Naive thymus-derived CD4-positive, alpha-beta T cell (primary cell): ENCODE measurements at regions of chr14 and their contacts with region 1.

Region 1: DNA sequence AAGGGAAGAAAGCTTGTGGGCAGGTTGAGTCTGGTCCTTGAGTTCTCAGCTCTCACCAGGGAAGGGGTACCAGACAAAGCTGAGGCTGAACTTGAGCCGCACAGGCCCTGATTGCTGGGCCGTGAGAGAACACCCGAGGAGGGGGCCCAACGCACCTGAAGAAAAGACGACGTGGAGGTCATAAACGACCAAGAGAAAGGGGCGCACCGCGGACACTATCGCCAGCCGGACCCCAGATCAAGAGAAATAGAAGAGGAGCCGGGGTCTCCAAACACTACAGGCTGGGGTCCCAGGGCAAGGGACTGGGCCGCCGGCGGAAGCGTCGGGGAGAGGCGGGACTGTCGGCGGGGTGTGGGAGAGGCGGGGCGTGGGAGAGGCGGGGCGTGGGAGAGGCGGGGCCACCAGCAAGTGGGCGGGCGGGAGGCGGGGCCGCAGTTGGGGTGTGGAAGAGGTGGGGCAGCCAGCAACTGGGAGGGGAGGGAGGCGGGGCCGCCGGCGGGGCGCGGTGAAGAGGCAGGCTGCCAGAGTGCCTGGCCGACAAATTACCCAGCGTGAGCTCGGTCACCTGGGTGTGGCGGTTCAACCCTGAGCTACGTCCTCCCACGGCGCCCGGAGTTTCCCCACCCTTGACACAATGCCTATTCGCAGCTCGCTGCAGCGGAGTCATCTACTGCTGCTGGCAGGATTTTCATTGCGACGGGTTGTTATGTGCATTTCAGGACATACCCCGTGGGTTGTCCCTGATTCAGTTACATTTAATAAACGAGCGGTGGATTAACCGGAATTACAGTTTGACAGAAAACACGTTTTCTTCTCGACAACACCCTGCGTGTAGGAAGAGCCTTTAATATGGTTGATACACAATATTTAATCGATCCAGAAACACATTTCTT is 15.5 kb upstream of the NEMF start:
- DNase-seq: peak; percentile 87 to 97 (median 93)
- ATAC-seq: peak; percentile 96
- H3K4me3 ChIP-seq: peak overlapping the region; percentile 75
- H3K4me3 Mint-ChIP-seq: peak overlapping the region; percentile 79 to 95 (median 90)
- H3K27ac ChIP-seq: peak overlapping the region; percentile 91
- H3K27ac Mint-ChIP-seq: peak overlapping the region; percentile 93 to 99 (median 97)
- H3K4me1 ChIP-seq: peaks cover 31 to 35% of the 10 kb centered on the region in 2 donors
- H3K4me1 Mint-ChIP-seq: peaks cover 9 to 31% (median 17%) of the 10 kb centered on the region in 7 donors
- H3K27me3 ChIP-seq: no peaks in the 10 kb centered on the region
- H3K27me3 Mint-ChIP-seq: no peaks in the 10 kb centered on the region

Region 2: DNA sequence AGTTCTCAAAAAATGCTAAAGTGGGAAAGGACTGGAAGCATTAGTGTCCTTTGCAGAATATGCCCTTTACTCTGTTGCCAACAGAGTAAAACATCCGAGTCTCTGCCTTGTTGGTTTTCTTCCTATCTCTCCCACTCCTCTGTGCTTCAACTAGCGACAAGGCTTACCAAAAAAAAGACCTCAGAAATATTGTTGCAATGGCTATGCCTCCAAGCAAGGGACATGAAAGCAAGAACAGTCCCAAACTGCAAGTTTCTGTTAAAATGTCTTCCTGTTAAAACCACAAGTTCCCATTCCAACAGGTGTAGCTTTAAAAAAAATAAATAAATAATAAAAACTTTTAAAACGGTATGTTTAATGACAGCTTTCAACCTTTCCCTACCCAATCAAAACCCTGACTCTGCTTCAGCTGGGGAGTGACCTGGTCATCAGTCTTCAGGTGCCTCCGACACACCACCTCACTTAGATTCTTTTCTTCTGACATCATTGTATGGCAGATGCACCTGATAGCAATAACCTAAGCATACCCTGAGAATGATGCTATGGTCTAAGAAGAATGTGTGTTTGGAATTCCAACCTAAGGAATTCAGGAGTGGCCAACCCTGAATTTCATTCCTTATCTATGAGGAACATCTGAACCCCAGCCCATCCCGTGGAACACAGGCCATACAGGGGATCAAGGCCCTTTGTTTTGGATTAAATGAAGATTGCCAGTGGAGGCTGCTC is 362.9 kb before region 1 on chr14:
- CTCF ChIA-PET with region 1: no interaction called
- POLR2A ChIA-PET with region 1: no interaction called
- intact Hi-C with region 1: no loop called
- DNase-seq: no peak
- ATAC-seq: no peak
- H3K4me3 ChIP-seq: no peak overlapping the region
- H3K4me3 Mint-ChIP-seq: no peak overlapping the region
- H3K27ac ChIP-seq: no peak overlapping the region
- H3K27ac Mint-ChIP-seq: no peak overlapping the region
- H3K4me1 ChIP-seq: no peaks in the 10 kb centered on the region
- H3K4me1 Mint-ChIP-seq: peaks cover 0 to 2% (median 0%) of the 10 kb centered on the region in 7 donors
- H3K27me3 ChIP-seq: no peaks in the 10 kb centered on the region
- H3K27me3 Mint-ChIP-seq: peaks cover 10 to 25% (median 15%) of the 10 kb centered on the region in 5 donors

Region 3: DNA sequence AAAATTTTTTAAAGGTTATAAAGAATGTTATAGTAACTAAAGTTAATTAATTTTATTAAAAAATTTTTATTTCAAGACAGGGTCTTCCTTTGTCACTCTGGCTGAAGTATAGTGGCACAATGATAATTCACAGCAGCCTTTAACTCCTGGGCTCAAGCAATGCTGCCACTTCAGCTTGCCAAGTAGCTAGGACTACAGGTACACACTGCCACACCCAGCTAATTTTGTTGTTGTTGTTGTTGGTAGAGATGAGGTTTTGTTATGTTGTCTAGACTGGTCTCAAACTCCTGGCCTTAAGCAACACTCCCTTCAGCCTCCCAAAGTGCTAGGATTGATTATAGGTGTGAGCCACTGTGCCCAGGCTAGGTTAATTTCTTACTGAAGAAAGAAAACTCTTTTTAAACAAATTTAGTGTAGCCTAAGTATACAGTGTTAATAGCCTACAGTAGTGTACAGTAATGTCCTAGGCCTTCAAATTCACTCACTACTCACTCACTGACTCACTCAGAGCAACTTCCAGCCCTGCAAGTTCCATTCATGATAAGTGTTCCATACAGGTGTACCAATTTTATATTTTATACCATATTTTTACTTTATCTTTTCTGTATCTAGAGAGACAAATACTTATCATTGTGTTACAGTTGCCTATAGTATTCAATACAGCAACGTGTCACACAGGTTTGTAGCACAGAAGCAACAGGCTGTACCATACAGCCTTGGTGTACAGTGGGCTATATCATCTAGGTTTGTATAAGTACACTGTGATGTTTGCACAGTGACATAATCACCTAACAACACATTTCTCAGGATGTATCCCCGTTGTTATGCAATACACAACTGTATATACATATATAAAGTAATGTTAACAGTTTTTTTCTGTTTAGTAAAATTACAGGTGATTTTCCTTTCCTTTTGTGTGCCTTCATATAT is 208.3 kb before region 1 on chr14:
- CTCF ChIA-PET with region 1: no interaction called
- POLR2A ChIA-PET with region 1: no interaction called
- intact Hi-C with region 1: no loop called
- DNase-seq: no peak
- ATAC-seq: no peak
- H3K4me3 ChIP-seq: no peak overlapping the region
- H3K4me3 Mint-ChIP-seq: no peak overlapping the region
- H3K27ac ChIP-seq: no peak overlapping the region
- H3K27ac Mint-ChIP-seq: no peak overlapping the region
- H3K4me1 ChIP-seq: no peaks in the 10 kb centered on the region
- H3K4me1 Mint-ChIP-seq: no peaks in the 10 kb centered on the region
- H3K27me3 ChIP-seq: no peaks in the 10 kb centered on the region
- H3K27me3 Mint-ChIP-seq: no peaks in the 10 kb centered on the region

Region 4: DNA sequence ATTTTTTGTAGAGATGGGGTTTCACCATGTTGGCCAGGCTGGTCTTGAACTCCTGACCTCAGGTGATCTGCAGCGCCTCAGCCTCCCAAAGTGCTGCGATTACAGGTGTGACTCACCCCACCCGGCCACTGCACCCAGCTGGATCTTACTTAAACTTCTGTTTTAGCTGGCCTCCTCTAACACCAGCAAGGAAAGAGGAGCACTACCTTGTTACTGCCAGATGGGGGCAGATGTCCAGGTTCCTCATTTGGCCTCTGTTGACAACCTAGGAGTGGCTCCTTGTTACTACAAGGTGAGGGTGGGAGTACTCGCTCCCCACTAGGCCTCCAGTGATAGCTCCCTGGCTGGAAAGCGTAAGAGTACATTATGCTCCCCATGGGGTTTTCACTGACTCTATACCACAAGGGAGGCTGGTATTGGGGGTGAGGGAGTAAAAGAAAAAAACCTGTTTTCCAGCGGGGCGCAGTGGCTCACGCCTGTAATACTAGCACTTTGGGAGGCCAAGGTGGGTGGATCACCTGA is 11.7 kb after region 1 on chr14:
- CTCF ChIA-PET with region 1: interaction called, 11 read pairs
- POLR2A ChIA-PET with region 1: interaction called, 15 read pairs
- intact Hi-C with region 1: loop called in 1 of 2 experiments (anchors 1 kb)
- DNase-seq: peak in 8 of 9 donors; percentile 32 to 64 (median 48)
- ATAC-seq: peak; percentile 92
- H3K4me3 ChIP-seq: no peak overlapping the region
- H3K4me3 Mint-ChIP-seq: no peak overlapping the region
- H3K27ac ChIP-seq: no peak overlapping the region
- H3K27ac Mint-ChIP-seq: peak overlapping the region in 6 of 9 donors; percentile 17 to 74 (median 44)
- H3K4me1 ChIP-seq: peaks cover 0 to 6% of the 10 kb centered on the region in 2 donors
- H3K4me1 Mint-ChIP-seq: peaks cover 10 to 30% (median 12%) of the 10 kb centered on the region in 7 donors
- H3K27me3 ChIP-seq: no peaks in the 10 kb centered on the region
- H3K27me3 Mint-ChIP-seq: peaks cover 0 to 3% (median 0%) of the 10 kb centered on the region in 5 donors

Region 5: GRCh38 chr14:49946320-49947141 is 78.5 kb after region 1 on chr14:
- CTCF ChIA-PET with region 1: interaction called, 7 read pairs
- POLR2A ChIA-PET with region 1: interaction called, 35 read pairs
- intact Hi-C with region 1: no loop called
- DNase-seq: peak in 7 of 9 donors; percentile 30 to 55 (median 43)
- ATAC-seq: peak; percentile 71
- H3K4me3 ChIP-seq: peak overlapping the region; percentile 36
- H3K4me3 Mint-ChIP-seq: peak overlapping the region; percentile 43 to 81 (median 74)
- H3K27ac ChIP-seq: peak overlapping the region; percentile 66
- H3K27ac Mint-ChIP-seq: peak overlapping the region; percentile 82 to 98 (median 94)
- H3K4me1 ChIP-seq: peaks cover 28 to 46% of the 10 kb centered on the region in 2 donors
- H3K4me1 Mint-ChIP-seq: peaks cover 26 to 86% (median 77%) of the 10 kb centered on the region in 7 donors
- H3K27me3 ChIP-seq: no peaks in the 10 kb centered on the region
- H3K27me3 Mint-ChIP-seq: no peaks in the 10 kb centered on the region